HepG2 (cell line): ENCODE measurements at regions of chr11 and their contacts with region 1.

Region 1: GRCh38 chr11:93766504-93766903 is 17.6 kb upstream of the MED17 start:
- DNase-seq: no peak
- ATAC-seq: no peak
- H3K4me3 ChIP-seq: no peak overlapping the region
- H3K27ac ChIP-seq: no peak overlapping the region
- H3K4me1 ChIP-seq: peaks cover 33% of the 10 kb centered on the region
- H3K27me3 ChIP-seq: no peaks in the 10 kb centered on the region
- CTCF ChIP-seq: no peak
- EP300 ChIP-seq: no peak
- POLR2A ChIP-seq: no peak
- RAD21 ChIP-seq: no peak

Region 2: DNA sequence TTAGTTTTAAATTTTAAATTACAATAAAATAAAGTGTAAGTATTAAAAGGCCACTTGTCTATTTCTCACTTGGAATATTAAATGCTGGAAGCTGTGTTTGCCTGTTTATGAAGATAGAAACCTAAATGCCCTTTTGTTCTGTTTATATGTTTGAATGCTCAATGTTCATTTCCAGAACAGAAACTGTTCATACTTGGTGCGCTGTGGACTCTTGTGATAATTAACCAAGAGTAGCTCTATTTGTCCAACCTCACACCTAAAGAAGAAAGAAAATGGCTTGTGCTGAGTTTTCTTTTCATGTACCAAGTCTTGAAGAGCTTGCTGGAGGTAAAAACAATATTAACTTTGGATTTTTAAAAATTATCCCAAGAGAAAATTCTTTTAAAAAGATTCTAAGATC is 19.4 kb before region 1 on chr11:
- CTCF ChIA-PET with region 1: no interaction called
- POLR2A ChIA-PET with region 1: interaction called, 29 read pairs
- in situ Hi-C with region 1: no loop called
- intact Hi-C with region 1: loop called (anchors 2 kb)
- DNase-seq: no peak
- ATAC-seq: peak; percentile 20; the same call in 2 of the 3 replicates
- H3K4me3 ChIP-seq: peak overlapping the region in 1 of 3 experiments; percentile 28; a peak in 1 of 6 replicates
- H3K27ac ChIP-seq: peak overlapping the region; percentile 54
- H3K4me1 ChIP-seq: peaks cover 63% of the 10 kb centered on the region
- H3K27me3 ChIP-seq: no peaks in the 10 kb centered on the region
- CTCF ChIP-seq: no peak
- EP300 ChIP-seq: no peak
- POLR2A ChIP-seq: no peak
- RAD21 ChIP-seq: no peak